ENCODE measurements at regions of chr10 and their contacts with region 1.

Region 1: DNA sequence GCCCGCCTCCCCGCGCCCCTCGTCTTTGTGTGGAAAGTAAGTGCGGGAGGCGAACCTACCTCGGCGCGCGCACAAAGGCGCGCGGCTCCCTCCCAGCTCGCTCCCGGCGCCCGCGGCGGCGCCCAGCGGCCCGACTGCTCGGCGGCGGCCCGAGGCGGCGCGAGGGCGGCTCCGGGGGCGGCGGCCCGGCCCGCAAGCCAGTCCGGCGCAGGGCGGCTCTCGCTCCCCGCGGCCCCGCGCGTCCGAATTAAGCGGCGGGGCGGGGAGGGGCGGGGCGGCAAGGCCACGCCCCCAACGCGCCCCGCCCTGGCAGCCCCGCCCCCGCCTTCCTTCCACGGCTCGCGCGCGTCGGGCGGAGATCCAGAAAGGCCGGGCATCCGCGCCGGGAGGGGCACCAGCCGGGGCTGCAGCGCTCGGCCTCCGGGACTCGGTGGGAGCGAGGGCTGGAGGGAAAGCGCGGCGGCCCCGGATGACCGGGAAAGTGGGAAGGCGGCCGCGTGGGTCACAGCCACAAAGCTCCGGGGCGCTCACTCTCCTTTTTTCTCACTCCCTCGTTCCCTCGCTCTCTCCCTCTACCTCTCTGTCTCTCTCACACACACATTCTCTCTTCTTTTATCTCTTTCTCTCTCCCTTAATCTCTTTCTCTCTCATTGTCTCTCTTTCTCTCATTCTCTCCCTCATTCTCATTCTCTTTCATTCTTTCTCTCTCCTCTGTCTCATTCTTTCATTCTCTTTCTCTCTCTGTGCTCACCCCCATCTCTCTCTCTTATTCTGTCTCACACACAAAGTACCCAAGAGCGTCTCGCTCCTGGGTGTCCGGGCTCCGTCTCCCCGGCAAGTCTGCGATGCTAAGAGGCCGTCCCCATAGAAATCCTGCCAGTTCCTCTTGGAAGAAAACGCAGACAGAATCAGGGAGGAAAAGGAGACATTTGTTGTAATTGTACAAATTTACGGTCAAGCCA is 170.2 kb downstream of the FAM107B start:
- DNase-seq: peak; percentile 92
- H3K4me3 Mint-ChIP-seq: peak overlapping the region; percentile 88
- H3K27ac Mint-ChIP-seq: peak overlapping the region; percentile 97
- H3K4me1 Mint-ChIP-seq: peaks cover 76% of the 10 kb centered on the region
- H3K27me3 Mint-ChIP-seq: no peaks in the 10 kb centered on the region

Region 2: DNA sequence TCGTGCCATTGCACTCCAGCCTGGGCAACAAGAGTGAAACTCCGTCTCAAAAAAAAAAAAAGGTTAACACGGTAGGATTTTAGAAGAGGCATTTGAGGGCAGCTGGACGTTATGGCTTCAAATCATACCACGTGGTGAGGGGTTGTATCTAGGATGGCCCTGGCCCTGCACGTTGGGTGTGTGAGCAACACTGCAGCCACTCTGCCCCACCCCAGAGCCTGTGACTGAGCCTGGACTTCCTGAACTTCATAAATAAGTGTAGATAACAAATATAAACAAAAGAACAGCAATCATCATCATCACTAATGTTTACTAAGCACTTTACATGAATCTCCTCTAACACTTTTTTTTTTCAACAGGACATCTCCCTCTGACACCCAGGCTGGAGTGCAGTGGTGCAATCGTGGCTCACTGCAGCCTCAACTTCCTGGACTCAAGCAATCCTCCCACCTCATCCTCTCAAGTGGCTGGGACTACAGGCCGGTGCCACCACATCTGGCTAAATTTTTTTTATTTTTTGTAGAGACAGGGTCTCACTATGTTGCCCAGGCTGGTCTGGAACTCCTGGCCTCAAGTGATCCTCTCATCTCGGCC is 104.2 kb before region 1 on chr10:
- intact Hi-C with region 1: loop called (anchors 2 kb)
- DNase-seq: no peak
- H3K4me3 Mint-ChIP-seq: no peak overlapping the region
- H3K27ac Mint-ChIP-seq: no peak overlapping the region
- H3K4me1 Mint-ChIP-seq: peaks cover 8% of the 10 kb centered on the region
- H3K27me3 Mint-ChIP-seq: peaks cover 15% of the 10 kb centered on the region

Region 3: DNA sequence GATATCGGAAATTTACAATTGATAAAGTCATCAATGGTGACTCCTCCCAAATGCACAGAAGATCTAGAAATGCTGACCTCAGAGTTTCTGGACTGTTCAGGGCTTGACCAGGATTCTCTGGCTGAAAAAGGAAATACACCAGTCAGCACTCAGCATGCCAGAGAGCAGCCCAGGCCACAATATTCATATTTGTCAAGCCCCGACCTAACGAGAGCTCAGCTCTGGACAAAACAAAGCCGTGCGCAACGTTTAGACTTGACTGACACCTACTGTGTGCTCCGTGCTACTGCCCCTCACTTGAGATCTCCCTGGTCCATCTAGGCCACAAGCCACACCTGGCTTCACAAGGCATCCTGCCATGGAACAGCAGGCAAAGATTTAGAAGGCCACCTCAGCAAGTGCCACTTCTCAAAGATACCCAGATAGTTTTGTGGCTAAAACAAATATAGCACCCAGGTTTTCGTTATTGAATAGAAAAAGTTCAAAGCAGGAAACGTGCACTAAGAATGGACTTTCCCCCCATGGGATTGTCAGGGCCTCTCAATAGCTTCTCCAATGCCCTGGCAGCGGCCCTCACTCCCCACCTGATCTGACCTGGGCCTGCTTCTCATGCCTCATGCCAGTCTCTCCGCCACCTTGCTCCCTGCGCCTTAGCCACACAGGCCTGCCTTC is 48.0 kb before region 1 on chr10:
- intact Hi-C with region 1: no loop called
- DNase-seq: no peak
- H3K4me3 Mint-ChIP-seq: no peak overlapping the region
- H3K27ac Mint-ChIP-seq: peak overlapping the region; percentile 54
- H3K4me1 Mint-ChIP-seq: peaks cover 77% of the 10 kb centered on the region
- H3K27me3 Mint-ChIP-seq: no peaks in the 10 kb centered on the region

Region 4: GRCh38 chr10:14571866-14572507 is 32.5 kb before region 1 on chr10:
- intact Hi-C with region 1: loop called (anchors 1 kb)
- DNase-seq: peak; percentile 89
- H3K4me3 Mint-ChIP-seq: peak overlapping the region; percentile 81
- H3K27ac Mint-ChIP-seq: peak overlapping the region; percentile 93
- H3K4me1 Mint-ChIP-seq: peaks cover 77% of the 10 kb centered on the region
- H3K27me3 Mint-ChIP-seq: no peaks in the 10 kb centered on the region

Region 5: DNA sequence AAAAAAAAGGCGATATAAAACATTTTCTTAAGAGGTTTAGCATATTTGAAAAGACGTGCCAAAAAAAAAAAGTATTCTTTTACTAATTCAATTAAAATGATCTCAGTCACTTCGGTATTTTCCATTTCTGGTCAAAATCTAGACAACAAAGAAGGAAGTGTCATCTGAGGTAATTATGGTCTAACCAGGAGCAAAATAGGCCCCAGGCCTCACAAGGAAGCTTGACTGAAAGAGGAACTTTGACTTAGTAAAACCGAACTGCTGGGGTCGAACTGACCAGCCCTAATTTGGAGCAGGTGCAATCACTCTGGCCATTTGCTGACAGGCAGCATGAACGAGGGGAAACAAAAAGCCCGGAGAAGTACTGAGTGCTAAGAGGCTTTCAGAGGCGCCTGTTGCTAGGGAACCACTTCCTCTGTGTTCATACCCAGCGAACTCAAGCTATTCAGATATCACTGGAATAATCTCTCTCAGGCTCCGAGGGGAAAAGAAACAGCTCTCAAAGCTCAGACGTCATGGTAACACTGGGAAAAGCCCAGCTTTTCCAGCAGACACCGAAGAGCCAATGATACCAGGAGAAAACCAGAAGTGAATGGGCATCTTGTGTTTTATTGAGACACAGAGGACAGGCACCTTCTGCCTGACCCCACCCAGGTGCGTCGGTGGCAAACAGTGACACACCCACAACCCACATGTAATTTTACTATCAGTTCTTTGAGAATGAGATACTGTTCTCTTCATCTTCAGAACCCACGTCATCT is 43.7 kb after region 1 on chr10:
- intact Hi-C with region 1: loop called (anchors 1 kb)
- DNase-seq: peak; percentile 92
- H3K4me3 Mint-ChIP-seq: peak overlapping the region; percentile 70
- H3K27ac Mint-ChIP-seq: peak overlapping the region; percentile 97
- H3K4me1 Mint-ChIP-seq: peaks cover 56% of the 10 kb centered on the region
- H3K27me3 Mint-ChIP-seq: no peaks in the 10 kb centered on the region

Region 6: DNA sequence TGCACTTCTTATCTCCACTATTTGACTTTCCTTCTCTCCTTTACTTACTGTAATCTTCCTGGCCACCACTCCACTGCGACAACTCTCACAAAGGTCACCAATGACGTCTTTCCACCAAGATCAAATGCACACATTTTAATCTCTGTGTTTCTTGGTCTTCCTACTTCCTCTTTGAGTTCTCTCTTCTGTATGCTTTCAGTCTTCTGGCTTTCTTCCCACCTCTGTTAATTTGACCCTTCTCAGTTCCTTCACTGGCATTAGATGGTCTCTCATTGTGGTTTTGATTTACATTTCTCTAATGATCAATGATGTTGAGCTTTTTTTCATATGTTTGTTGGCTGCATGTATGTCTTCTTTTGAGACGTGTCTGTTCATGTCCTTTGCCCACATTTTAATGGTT is 138.4 kb after region 1 on chr10:
- intact Hi-C with region 1: loop called (anchors 5 kb)
- DNase-seq: no peak
- H3K4me3 Mint-ChIP-seq: peak overlapping the region; percentile 21
- H3K27ac Mint-ChIP-seq: peak overlapping the region; percentile 65
- H3K4me1 Mint-ChIP-seq: peaks cover 19% of the 10 kb centered on the region
- H3K27me3 Mint-ChIP-seq: no peaks in the 10 kb centered on the region

Region 7: GRCh38 chr10:14837757-14838581 is 233.5 kb after region 1 on chr10 and contains the starts of genes CDNF, HSPA14 and MSANTD7:
- intact Hi-C with region 1: loop called (anchors 1 kb)
- DNase-seq: peak; percentile 100
- H3K4me3 Mint-ChIP-seq: peak within 1 kb of the TSS; percentile 92
- H3K27ac Mint-ChIP-seq: peak within 1 kb of the TSS; percentile 96
- H3K4me1 Mint-ChIP-seq: peaks cover 18% of the 10 kb centered on the region
- H3K27me3 Mint-ChIP-seq: no peaks in the 10 kb centered on the region
- total RNA-seq, gene CDNF: 0.62 and 0.70 TPM in 2 replicates
- total RNA-seq, gene HSPA14: 42.0 and 44.1 TPM in 2 replicates
- total RNA-seq, gene MSANTD7: 28.9 and 30.3 TPM in 2 replicates

Region 8: GRCh38 chr10:14959276-14960057 is 355.0 kb after region 1 on chr10 and contains the start of gene MEIG1:
- intact Hi-C with region 1: loop called (anchors 2 kb)
- DNase-seq: peak; percentile 98
- H3K4me3 Mint-ChIP-seq: peak within 1 kb of the TSS; percentile 93
- H3K27ac Mint-ChIP-seq: peak within 1 kb of the TSS; percentile 96
- H3K4me1 Mint-ChIP-seq: peaks cover 17% of the 10 kb centered on the region
- H3K27me3 Mint-ChIP-seq: no peaks in the 10 kb centered on the region
- total RNA-seq, gene MEIG1: not detected in 2 replicates

Measured in activated CD4-positive, alpha-beta T cell treated with anti-CD3 and anti-CD28 coated beads, Interleukin-2, amount 10 ng/mL, durations not matched to agents 24 days and 14 days (primary cell).